BJ (cell line): ENCODE measurements at regions of chr3 and their contacts with region 1.

Region 1: GRCh38 chr3:58630076-58630709 is 36.4 kb downstream of the FAM3D start:
- DNase-seq: no peak
- H3K4me3 ChIP-seq: no peak overlapping the region
- H3K27me3 ChIP-seq: no peaks in the 10 kb centered on the region
- CTCF ChIP-seq: peak; percentile 86

Region 2: DNA sequence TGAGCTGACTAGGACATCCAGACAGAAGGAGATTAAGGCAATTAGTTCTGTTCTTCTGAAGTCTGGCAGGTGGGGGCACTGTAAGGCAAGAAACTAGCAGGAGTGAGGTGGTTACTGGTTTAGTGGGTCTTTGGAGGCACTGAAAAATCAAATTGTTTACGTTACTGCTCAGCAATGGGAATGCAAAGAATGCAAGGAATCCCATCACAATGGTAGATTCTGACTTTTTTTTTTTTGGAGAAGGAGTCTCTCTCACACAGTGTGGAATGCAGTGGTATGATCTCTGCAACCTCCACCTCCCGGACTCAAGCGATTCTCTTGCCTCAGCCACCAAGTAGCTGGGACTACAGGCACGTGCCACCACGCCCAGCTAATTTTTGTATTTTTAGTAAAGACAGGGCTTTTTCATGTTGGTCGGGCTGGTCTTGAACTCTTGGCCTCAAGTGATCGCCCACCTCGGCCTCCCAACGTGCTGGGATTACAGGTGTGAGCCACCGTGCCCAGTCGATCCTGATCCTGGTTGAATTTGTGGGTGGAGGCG is 69.4 kb before region 1 on chr3:
- CTCF ChIA-PET with region 1: interaction called, 371 read pairs
- POLR2A ChIA-PET with region 1: interaction called, 17 read pairs
- DNase-seq: peak; percentile 97
- H3K4me3 ChIP-seq: no peak overlapping the region
- H3K27me3 ChIP-seq: no peaks in the 10 kb centered on the region
- CTCF ChIP-seq: peak; percentile 65

Region 3: DNA sequence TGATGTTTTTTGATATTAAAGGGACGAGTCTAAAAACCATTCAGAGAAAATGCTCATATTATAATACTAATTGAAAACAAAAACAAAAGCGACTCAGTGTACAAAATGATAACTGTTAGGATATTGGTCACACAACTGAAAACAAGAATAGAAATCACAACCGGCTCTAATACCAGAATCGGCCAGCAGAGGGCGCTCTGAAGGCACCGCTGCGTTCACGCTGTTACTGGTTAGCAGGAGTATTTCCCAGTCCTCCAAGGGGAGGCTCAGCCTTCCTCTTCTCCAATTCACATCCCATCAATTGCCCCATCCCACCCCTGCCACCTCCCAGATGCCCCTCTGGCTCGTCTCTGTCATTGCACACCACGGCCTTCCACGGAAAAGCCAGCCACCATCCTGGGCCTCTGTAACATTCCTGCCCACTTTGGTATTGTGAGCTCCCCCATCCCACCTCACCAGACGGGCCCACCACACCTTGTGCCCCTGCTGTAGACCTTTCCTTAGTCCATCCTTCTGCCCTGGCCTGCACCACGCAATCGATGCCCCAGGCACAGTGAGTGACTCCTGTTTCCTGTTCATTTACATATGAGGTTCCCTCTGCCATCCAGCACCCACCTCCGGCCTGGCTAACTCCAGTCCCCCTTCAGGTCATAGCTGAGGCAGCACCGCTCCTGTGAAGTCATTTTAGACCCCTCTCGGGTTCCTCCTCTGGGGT is 61.5 kb before region 1 on chr3:
- CTCF ChIA-PET with region 1: interaction called, 371 read pairs
- POLR2A ChIA-PET with region 1: no interaction called
- DNase-seq: no peak
- H3K4me3 ChIP-seq: no peak overlapping the region
- H3K27me3 ChIP-seq: no peaks in the 10 kb centered on the region
- CTCF ChIP-seq: peak; percentile 85